ENCODE measurements at regions of chr3 and their contacts with region 1.

Region 1: GRCh38 chr3:58041654-58042324 is 33.6 kb downstream of the FLNB start:
- DNase-seq: peak in 1 of 2 experiments; percentile 47
- H3K4me3 ChIP-seq: no peak overlapping the region
- H3K27ac ChIP-seq: peak overlapping the region; percentile 55; the same call in 1 of the 2 replicates
- H3K4me1 ChIP-seq: peaks cover 20 to 43% (median 36%) of the 10 kb centered on the region in 4 experiments
- H3K27me3 ChIP-seq: no peaks in the 10 kb centered on the region
- CTCF ChIP-seq: no peak
- EP300 ChIP-seq: no peak
- POLR2A ChIP-seq: no peak
- RAD21 ChIP-seq: no peak

Region 2: DNA sequence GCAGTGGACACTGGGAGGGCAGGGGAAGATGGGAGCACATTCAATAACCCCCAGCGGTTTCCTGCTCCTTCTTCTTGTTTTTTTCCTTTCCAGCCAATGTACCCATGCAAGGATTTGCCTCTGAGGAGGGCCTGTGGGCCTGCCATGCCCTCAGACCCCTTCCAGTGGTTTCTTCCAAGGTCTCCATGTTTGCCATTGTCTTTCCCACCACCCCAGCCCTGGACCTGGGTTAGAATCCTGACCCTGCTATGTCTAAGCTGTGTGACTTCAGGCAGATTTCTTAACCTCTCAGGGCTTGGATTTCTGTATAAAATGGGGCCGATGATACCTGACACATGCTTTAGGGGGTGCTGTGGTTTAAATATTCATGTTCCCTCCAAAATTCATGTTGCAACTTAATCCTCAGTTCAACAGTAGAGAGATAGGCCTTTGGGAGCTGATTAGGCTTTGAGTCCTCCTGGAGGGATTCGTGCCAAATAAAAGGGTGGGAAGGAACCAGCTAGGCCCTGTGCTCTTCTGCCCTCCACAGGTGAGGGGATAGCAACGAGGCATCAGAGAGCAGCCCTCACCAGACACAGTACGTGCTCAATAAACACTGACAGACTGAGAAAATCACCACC is 79.9 kb before region 1 on chr3:
- CTCF ChIA-PET with region 1: no interaction called
- POLR2A ChIA-PET with region 1: no interaction called
- DNase-seq: no peak
- H3K4me3 ChIP-seq: no peak overlapping the region
- H3K27ac ChIP-seq: no peak overlapping the region
- H3K4me1 ChIP-seq: peaks cover 0 to 3% (median 0%) of the 10 kb centered on the region in 4 experiments; a peak in 2 of 7 replicates
- H3K27me3 ChIP-seq: no peaks in the 10 kb centered on the region
- CTCF ChIP-seq: peak; percentile 21 to 57 (median 32); a peak in 3 of 4 replicates
- EP300 ChIP-seq: no peak
- POLR2A ChIP-seq: no peak
- RAD21 ChIP-seq: peak; percentile 68 to 71

Region 3: DNA sequence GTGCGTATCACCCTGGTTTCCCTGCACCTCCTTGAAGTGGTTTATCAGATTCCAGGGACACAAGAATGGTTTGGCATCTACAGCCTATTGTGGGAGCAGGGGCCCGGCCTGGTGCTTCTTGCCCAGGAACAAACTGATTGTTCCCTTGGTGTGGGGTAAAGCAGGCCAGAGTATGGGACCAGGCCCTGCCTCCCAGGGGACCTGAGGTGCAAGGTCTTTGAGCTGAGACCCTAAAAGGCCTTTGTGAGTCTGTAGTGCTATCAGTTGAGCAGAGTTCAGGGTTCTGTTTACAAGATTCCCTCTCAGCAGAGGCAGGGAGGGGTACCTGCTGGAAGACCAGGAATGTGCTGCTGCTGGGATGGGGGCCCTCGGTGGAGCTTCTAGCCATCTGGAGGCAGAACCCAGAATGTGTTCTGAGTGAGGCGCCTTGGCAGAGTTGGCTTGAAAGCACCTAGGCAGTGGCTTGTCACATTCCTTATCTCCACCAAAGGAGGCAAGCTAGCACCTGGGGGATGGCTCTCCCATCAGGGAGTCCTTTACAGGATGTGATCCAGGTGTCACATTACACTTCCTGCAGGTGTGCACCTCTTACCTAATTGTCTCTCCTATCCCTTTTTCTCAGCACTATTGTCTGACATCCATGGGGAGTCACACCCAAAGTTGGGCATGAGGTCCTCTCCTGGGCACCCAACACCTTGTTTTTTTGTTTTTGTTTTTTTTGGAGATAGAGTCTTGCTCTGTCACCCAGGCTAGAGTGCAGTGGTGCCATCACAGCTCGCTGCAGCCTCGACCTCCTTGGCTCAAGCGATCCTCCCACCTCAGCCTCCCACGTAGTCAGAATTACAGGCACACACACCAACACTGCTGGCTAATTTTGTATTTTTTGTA is 20.5 kb before region 1 on chr3:
- CTCF ChIA-PET with region 1: interaction called, 14 read pairs
- POLR2A ChIA-PET with region 1: interaction called, 12 read pairs
- DNase-seq: peak in 1 of 2 experiments; percentile 72
- H3K4me3 ChIP-seq: peak overlapping the region in 3 of 4 experiments; percentile 5 to 11 (median 7); a peak in 3 of 8 replicates
- H3K27ac ChIP-seq: peak overlapping the region; percentile 88
- H3K4me1 ChIP-seq: peaks cover 16 to 44% (median 33%) of the 10 kb centered on the region in 4 experiments
- H3K27me3 ChIP-seq: no peaks in the 10 kb centered on the region
- CTCF ChIP-seq: peak in 2 of 3 experiments; percentile 27 to 36; a peak in 2 of 4 replicates
- EP300 ChIP-seq: peak in 1 of 2 experiments; percentile 71; a peak in 1 of 3 replicates
- POLR2A ChIP-seq: peak in 1 of 2 experiments; percentile 69; a peak in 1 of 3 replicates
- RAD21 ChIP-seq: peak; percentile 34 to 57; a peak in 2 of 4 replicates

Region 4: DNA sequence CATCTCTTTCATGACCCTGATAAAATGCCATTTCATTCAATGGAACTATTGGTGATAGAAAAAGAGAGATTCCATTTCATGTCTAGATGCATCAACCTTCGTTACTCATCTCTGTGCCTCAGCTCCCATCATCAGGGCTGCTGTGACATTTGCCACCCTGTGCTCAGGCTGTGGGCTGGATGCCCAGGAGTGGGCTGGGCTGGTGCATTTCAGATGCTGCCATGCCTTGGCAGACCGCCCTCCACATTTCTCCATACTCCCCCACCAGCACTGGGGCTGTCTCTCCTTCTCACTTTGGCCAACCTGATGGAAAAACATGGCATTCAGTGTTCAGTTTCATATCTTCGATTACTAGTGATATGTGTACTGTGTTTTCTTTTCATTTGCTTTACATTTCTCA is 109.8 kb after region 1 on chr3:
- CTCF ChIA-PET with region 1: no interaction called
- POLR2A ChIA-PET with region 1: no interaction called
- DNase-seq: no peak
- H3K4me3 ChIP-seq: no peak overlapping the region
- H3K27ac ChIP-seq: no peak overlapping the region
- H3K4me1 ChIP-seq: no peaks in the 10 kb centered on the region
- H3K27me3 ChIP-seq: no peaks in the 10 kb centered on the region
- CTCF ChIP-seq: no peak
- EP300 ChIP-seq: no peak
- POLR2A ChIP-seq: no peak
- RAD21 ChIP-seq: no peak

Region 5: GRCh38 chr3:58161435-58162398 is 119.9 kb after region 1 on chr3:
- CTCF ChIA-PET with region 1: no interaction called
- POLR2A ChIA-PET with region 1: no interaction called
- DNase-seq: no peak
- H3K4me3 ChIP-seq: no peak overlapping the region
- H3K27ac ChIP-seq: no peak overlapping the region
- H3K4me1 ChIP-seq: peaks cover 0 to 3% (median 0%) of the 10 kb centered on the region in 4 experiments; a peak in 1 of 7 replicates
- H3K27me3 ChIP-seq: no peaks in the 10 kb centered on the region
- CTCF ChIP-seq: no peak
- EP300 ChIP-seq: no peak
- POLR2A ChIP-seq: no peak
- RAD21 ChIP-seq: no peak

Measured in H1 (cell line).